ENCODE measurements at regions of chr20 and their contacts with region 1.

Region 1: DNA sequence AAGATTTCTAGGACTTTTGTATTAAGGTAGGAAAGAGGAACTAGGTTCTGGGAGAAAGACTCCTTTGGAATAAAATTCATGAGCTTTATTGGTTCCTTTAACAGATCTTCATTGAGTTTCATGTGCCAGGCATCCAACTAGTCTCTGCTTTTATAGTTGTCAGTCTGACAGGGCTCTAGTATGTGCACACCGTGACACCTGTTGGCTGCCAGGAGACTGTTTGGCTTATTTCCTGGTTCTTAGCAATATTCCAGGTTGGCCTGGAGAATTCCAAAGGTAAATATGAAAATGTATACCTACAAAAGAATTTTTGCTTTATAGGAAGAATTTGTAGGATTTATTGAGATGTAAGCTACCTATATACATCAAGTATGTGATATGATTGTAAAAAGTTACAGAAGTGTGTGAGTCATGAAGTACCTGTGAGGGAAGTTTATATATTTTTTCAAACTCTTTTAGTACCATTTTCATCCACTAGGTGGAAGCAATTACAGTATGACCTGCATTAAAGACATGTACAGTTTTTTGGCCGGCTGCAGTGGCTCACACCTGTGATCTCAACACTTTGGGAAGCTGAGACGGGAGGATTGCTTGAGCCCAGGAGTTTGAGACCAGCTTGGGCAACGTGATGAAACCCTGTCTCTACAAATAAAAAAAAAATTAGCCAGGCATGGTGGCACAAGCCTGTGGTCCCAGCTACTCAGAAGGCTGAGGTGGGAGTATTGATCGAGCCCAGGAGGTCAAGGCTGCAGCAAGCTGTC is 35.2 kb downstream of the NDUFAF5 start:
- DNase-seq: peak; percentile 44
- H3K4me3 ChIP-seq: peak overlapping the region in 1 of 2 experiments; percentile 9; a peak in 1 of 4 replicates
- H3K27ac ChIP-seq: no peak overlapping the region
- H3K4me1 ChIP-seq: peaks cover 0 to 10% of the 10 kb centered on the region in 2 experiments; a peak in 1 of 4 replicates
- H3K27me3 ChIP-seq: no peaks in the 10 kb centered on the region
- CTCF ChIP-seq: peak; percentile 77
- EP300 ChIP-seq: no peak
- RAD21 ChIP-seq: peak; percentile 62

Region 2: GRCh38 chr20:13525225-13525940 is 294.7 kb before region 1 on chr20:
- CTCF ChIA-PET with region 1: no interaction called
- POLR2A ChIA-PET with region 1: no interaction called
- DNase-seq: no peak
- H3K4me3 ChIP-seq: no peak overlapping the region
- H3K27ac ChIP-seq: peak overlapping the region in 1 of 2 experiments; percentile 63; a peak in 2 of 4 replicates
- H3K4me1 ChIP-seq: peaks cover 0 to 5% of the 10 kb centered on the region in 2 experiments; a peak in 2 of 4 replicates
- H3K27me3 ChIP-seq: no peaks in the 10 kb centered on the region
- CTCF ChIP-seq: no peak
- EP300 ChIP-seq: peak in 1 of 2 experiments; percentile 35; a peak in 1 of 4 replicates
- RAD21 ChIP-seq: no peak

Region 3: GRCh38 chr20:13638496-13639222 is 181.4 kb before region 1 on chr20 and contains the start of gene TASP1:
- CTCF ChIA-PET with region 1: no interaction called
- POLR2A ChIA-PET with region 1: no interaction called
- DNase-seq: peak; percentile 96
- H3K4me3 ChIP-seq: peak within 1 kb of the TSS; percentile 89 to 99
- H3K27ac ChIP-seq: peak within 1 kb of the TSS; percentile 64 to 87
- H3K4me1 ChIP-seq: peaks cover 0 to 3% of the 10 kb centered on the region in 2 experiments; a peak in 2 of 4 replicates
- H3K27me3 ChIP-seq: no peaks in the 10 kb centered on the region
- CTCF ChIP-seq: no peak
- EP300 ChIP-seq: no peak
- RAD21 ChIP-seq: no peak
- polyA plus RNA-seq, gene TASP1: 5.9 and 8.3 TPM in 2 replicates

Region 4: GRCh38 chr20:13800728-13801134 is 19.3 kb before region 1 on chr20:
- CTCF ChIA-PET with region 1: interaction called, 10 read pairs
- POLR2A ChIA-PET with region 1: no interaction called
- DNase-seq: peak; percentile 67
- H3K4me3 ChIP-seq: 0 out of 4 replicates have a peak overlapping the region, but pooled peaks of 1 of the 2 experiments have one; percentile 8
- H3K27ac ChIP-seq: peak overlapping the region; percentile 27 to 95; a peak in 3 of 4 replicates
- H3K4me1 ChIP-seq: peaks cover 8 to 17% of the 10 kb centered on the region in 2 experiments
- H3K27me3 ChIP-seq: no peaks in the 10 kb centered on the region
- CTCF ChIP-seq: no peak
- EP300 ChIP-seq: peak; percentile 47 to 62; a peak in 3 of 4 replicates
- RAD21 ChIP-seq: no peak

Region 5: DNA sequence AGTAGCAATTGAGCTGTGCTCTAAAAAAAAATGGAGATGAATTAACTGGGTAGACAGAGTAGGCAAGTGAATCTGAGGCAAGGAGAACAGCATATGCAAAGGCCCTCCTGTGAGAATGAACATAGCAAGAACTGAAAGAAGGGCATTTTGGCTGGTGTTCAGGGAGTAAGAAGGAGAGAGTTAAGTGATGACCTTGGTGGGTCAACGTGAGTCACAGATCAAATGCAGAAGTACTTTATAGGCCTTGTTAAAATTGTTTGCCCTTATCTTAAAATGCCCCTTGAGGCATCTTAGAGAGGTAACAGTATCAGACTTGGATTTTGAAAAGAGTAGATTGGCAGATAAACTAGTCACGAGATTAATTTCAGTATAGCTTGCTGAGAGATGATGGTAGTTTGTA is 10.7 kb before region 1 on chr20:
- CTCF ChIA-PET with region 1: interaction called, 13 read pairs
- POLR2A ChIA-PET with region 1: no interaction called
- DNase-seq: no peak
- H3K4me3 ChIP-seq: no peak overlapping the region
- H3K27ac ChIP-seq: no peak overlapping the region
- H3K4me1 ChIP-seq: no peaks in the 10 kb centered on the region
- H3K27me3 ChIP-seq: no peaks in the 10 kb centered on the region
- CTCF ChIP-seq: no peak
- EP300 ChIP-seq: no peak
- RAD21 ChIP-seq: no peak

Region 6: GRCh38 chr20:13883425-13883824 is 63.4 kb after region 1 on chr20:
- CTCF ChIA-PET with region 1: interaction called, 11 read pairs
- POLR2A ChIA-PET with region 1: no interaction called
- DNase-seq: no peak
- H3K4me3 ChIP-seq: no peak overlapping the region
- H3K27ac ChIP-seq: no peak overlapping the region
- H3K4me1 ChIP-seq: no peaks in the 10 kb centered on the region
- H3K27me3 ChIP-seq: no peaks in the 10 kb centered on the region
- CTCF ChIP-seq: no peak
- EP300 ChIP-seq: no peak
- RAD21 ChIP-seq: no peak

Region 7: DNA sequence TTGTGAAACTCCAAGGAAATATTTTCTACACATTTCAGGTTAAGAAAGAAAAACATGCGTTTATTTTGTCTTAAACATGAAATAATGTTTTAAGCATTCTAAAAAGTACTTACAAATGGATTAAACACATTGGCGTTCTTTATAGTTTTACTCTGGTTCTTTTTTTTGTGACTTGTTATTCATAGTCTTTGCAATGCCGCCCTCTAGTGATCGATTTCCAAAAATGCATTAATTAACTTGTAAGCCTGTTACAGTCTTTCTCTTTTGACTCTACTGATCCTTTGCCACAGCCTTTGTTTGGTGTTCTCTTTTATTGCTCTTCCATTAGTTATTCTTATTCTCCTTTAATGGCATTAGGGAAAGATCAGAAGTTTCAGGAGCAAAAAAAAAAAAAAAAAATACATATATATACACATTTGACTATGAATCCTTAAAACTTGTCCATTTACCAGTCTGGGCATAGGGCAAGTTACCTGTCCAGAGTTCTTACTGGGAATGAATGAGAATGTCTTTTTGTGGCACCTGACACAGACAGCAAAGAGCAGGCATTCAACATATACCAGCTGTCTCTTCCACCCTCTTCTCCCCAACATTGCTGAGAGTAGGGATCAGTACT is 235.2 kb after region 1 on chr20:
- CTCF ChIA-PET with region 1: interaction called, 44 read pairs
- POLR2A ChIA-PET with region 1: no interaction called
- DNase-seq: peak; percentile 33
- H3K4me3 ChIP-seq: no peak overlapping the region
- H3K27ac ChIP-seq: no peak overlapping the region
- H3K4me1 ChIP-seq: no peaks in the 10 kb centered on the region
- H3K27me3 ChIP-seq: no peaks in the 10 kb centered on the region
- CTCF ChIP-seq: peak; percentile 79
- EP300 ChIP-seq: no peak
- RAD21 ChIP-seq: peak; percentile 85

Measured in SK-N-SH (cell line).